ENCODE measurements at regions of chr19 and their contacts with region 1.

Region 1: GRCh38 chr19:11435058-11435832 is at the starts of genes ODAD3 and PRKCSH:
- DNase-seq: peak; percentile 99
- ATAC-seq: peak; percentile 95
- H3K4me3 Mint-ChIP-seq: peak within 1 kb of the TSS; percentile 100
- H3K27ac Mint-ChIP-seq: peak within 1 kb of the TSS; percentile 96
- H3K4me1 Mint-ChIP-seq: peaks cover 25% of the 10 kb centered on the region
- H3K27me3 Mint-ChIP-seq: peaks cover 4% of the 10 kb centered on the region
- total RNA-seq, gene ODAD3: 0.15 to 0.54 TPM
- total RNA-seq, gene PRKCSH: 278 to 306 TPM

Region 2: GRCh38 chr19:11422163-11423021 is 12.9 kb before region 1 on chr19:
- CTCF ChIA-PET with region 1: interaction called, 23 read pairs
- DNase-seq: peak; percentile 92
- ATAC-seq: peak; percentile 73
- H3K4me3 Mint-ChIP-seq: peak overlapping the region; percentile 59
- H3K27ac Mint-ChIP-seq: no peak overlapping the region
- H3K4me1 Mint-ChIP-seq: peaks cover 28% of the 10 kb centered on the region
- H3K27me3 Mint-ChIP-seq: peaks cover 61% of the 10 kb centered on the region

Region 3: DNA sequence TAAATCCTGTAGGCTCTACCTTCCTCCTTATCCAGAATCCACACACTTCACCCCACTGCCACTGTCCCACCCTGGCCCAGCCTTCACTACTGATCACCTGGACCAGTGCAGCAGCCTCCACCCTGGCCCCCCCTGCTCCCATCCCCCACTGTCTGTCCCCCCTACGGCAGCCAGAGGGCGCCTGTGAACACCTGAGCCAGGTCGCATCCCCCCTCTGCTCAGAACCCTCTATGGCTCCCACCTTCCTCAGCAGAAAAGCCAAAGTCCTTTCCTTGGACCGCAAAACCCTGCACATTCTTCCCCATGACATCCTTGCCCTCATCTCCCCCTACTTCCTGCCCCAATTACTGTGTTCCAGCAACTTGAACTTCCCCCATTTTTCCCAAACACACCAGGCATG is 25.0 kb after region 1 on chr19:
- CTCF ChIA-PET with region 1: no interaction called
- DNase-seq: no peak
- ATAC-seq: no peak
- H3K4me3 Mint-ChIP-seq: no peak overlapping the region
- H3K27ac Mint-ChIP-seq: no peak overlapping the region
- H3K4me1 Mint-ChIP-seq: no peaks in the 10 kb centered on the region
- H3K27me3 Mint-ChIP-seq: peaks cover 4% of the 10 kb centered on the region